Naive thymus-derived CD4-positive, alpha-beta T cell (primary cell): ENCODE measurements at regions of chr1 and their contacts with region 1.

Region 1: GRCh38 chr1:108691942-108692723 is at the start of gene PRPF38B:
- DNase-seq: peak; percentile 86 to 94 (median 93)
- ATAC-seq: peak; percentile 91
- H3K4me3 ChIP-seq: peak within 1 kb of the TSS; percentile 80
- H3K4me3 Mint-ChIP-seq: peak within 1 kb of the TSS; percentile 91 to 100 (median 97)
- H3K27ac ChIP-seq: peak within 1 kb of the TSS; percentile 90
- H3K27ac Mint-ChIP-seq: peak within 1 kb of the TSS; percentile 90 to 100 (median 98)
- H3K4me1 ChIP-seq: peaks cover 14 to 34% of the 10 kb centered on the region in 2 donors
- H3K4me1 Mint-ChIP-seq: peaks cover 24 to 52% (median 41%) of the 10 kb centered on the region in 7 donors
- H3K27me3 ChIP-seq: no peaks in the 10 kb centered on the region
- H3K27me3 Mint-ChIP-seq: peaks cover 0 to 10% (median 0%) of the 10 kb centered on the region in 5 donors
- total RNA-seq, gene PRPF38B: 85.5 to 136 (median 118) TPM

Region 2: GRCh38 chr1:108512239-108512981 is 179.7 kb before region 1 on chr1:
- CTCF ChIA-PET with region 1: interaction called, 9 read pairs
- POLR2A ChIA-PET with region 1: interaction called, 15 read pairs
- intact Hi-C with region 1: loop called (anchors 1 to 5 kb)
- DNase-seq: peak in 6 of 9 donors; percentile 27 to 58 (median 50)
- ATAC-seq: peak; percentile 85
- H3K4me3 ChIP-seq: no peak overlapping the region
- H3K4me3 Mint-ChIP-seq: no peak overlapping the region
- H3K27ac ChIP-seq: no peak overlapping the region
- H3K27ac Mint-ChIP-seq: no peak overlapping the region
- H3K4me1 ChIP-seq: no peaks in the 10 kb centered on the region
- H3K4me1 Mint-ChIP-seq: no peaks in the 10 kb centered on the region
- H3K27me3 ChIP-seq: no peaks in the 10 kb centered on the region
- H3K27me3 Mint-ChIP-seq: peaks cover 4 to 64% (median 12%) of the 10 kb centered on the region in 5 donors

Region 3: DNA sequence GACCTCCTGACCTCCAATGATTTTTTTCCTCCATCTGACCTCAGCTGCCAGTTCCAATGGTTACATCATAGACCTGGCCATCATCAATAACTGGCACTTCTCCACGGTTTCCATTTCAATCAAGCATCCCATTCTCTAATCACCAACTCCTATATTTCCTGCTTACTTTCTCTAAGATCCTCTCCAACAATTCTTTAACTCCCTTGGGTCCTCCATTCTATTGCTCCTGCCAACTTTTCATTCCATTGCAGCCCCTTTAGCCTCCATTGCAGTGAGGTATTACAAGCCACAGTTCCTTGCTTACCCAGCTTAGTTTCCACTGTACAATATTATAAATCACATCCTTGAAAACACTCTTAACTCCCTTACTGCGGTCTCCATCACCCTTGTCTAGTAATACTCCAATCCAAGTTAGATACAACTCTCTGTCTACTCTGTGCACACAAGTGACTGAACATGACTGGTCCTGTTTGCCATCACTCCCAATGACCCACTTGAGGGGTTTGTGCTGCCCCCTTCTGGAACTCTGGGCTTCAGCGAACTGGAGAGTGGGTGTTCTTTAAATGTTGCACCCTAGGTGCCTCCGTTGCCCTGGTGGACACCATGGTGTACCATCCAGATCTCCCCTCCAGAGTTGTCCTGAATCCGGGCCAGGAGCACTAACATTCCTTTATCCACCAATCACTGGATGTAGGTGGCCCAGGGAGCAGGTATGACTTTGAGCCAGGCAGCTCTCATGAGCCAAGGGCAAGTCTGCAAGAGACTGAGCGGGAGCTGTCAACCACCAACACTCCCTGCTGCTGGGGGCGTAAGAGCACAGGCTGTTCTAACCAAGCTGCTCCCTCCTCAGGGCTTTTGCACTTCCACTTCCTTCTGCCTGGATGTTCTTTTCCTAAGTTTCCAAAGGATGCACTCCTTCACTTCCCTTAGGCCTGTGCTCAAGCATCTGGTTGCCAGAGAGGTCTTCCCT is 16.8 kb after region 1 on chr1:
- CTCF ChIA-PET with region 1: interaction called, 16 read pairs
- POLR2A ChIA-PET with region 1: interaction called, 144 read pairs
- intact Hi-C with region 1: loop called (anchors 1 kb)
- DNase-seq: peak; percentile 24 to 65 (median 54)
- ATAC-seq: peak; percentile 87
- H3K4me3 ChIP-seq: no peak overlapping the region
- H3K4me3 Mint-ChIP-seq: peak overlapping the region in 2 of 10 donors; percentile 15 to 38
- H3K27ac ChIP-seq: no peak overlapping the region
- H3K27ac Mint-ChIP-seq: peak overlapping the region in 3 of 9 donors; percentile 1 to 38 (median 2)
- H3K4me1 ChIP-seq: peaks cover 21 to 24% of the 10 kb centered on the region in 2 donors
- H3K4me1 Mint-ChIP-seq: peaks cover 7 to 44% (median 33%) of the 10 kb centered on the region in 7 donors
- H3K27me3 ChIP-seq: no peaks in the 10 kb centered on the region
- H3K27me3 Mint-ChIP-seq: peaks cover 0 to 20% (median 0%) of the 10 kb centered on the region in 5 donors

Region 4: GRCh38 chr1:108852221-108852975 is 160.3 kb after region 1 on chr1:
- CTCF ChIA-PET with region 1: no interaction called
- POLR2A ChIA-PET with region 1: no interaction called
- intact Hi-C with region 1: no loop called
- DNase-seq: no peak
- ATAC-seq: peak; percentile 51
- H3K4me3 ChIP-seq: no peak overlapping the region
- H3K4me3 Mint-ChIP-seq: peak overlapping the region in 1 of 10 donors; percentile 40
- H3K27ac ChIP-seq: no peak overlapping the region
- H3K27ac Mint-ChIP-seq: no peak overlapping the region
- H3K4me1 ChIP-seq: no peaks in the 10 kb centered on the region
- H3K4me1 Mint-ChIP-seq: peaks cover 4 to 16% (median 7%) of the 10 kb centered on the region in 7 donors
- H3K27me3 ChIP-seq: no peaks in the 10 kb centered on the region
- H3K27me3 Mint-ChIP-seq: peaks cover 7 to 44% (median 19%) of the 10 kb centered on the region in 5 donors

Region 5: GRCh38 chr1:108897865-108898720 is 206.0 kb after region 1 on chr1:
- CTCF ChIA-PET with region 1: interaction called, 5 read pairs
- POLR2A ChIA-PET with region 1: interaction called, 27 read pairs
- intact Hi-C with region 1: loop called (anchors 1 kb)
- DNase-seq: peak in 7 of 9 donors; percentile 30 to 67 (median 54)
- ATAC-seq: peak; percentile 82
- H3K4me3 ChIP-seq: no peak overlapping the region
- H3K4me3 Mint-ChIP-seq: no peak overlapping the region
- H3K27ac ChIP-seq: no peak overlapping the region
- H3K27ac Mint-ChIP-seq: no peak overlapping the region
- H3K4me1 ChIP-seq: no peaks in the 10 kb centered on the region
- H3K4me1 Mint-ChIP-seq: peaks cover 0 to 4% (median 1%) of the 10 kb centered on the region in 7 donors
- H3K27me3 ChIP-seq: no peaks in the 10 kb centered on the region
- H3K27me3 Mint-ChIP-seq: peaks cover 0 to 4% (median 3%) of the 10 kb centered on the region in 5 donors

Region 6: GRCh38 chr1:109090196-109091077 is 398.3 kb after region 1 on chr1 and contains the start of gene TMEM167B:
- CTCF ChIA-PET with region 1: interaction called, 4 read pairs
- POLR2A ChIA-PET with region 1: interaction called, 13 read pairs
- intact Hi-C with region 1: no loop called
- DNase-seq: peak; percentile 71 to 92 (median 87)
- ATAC-seq: peak; percentile 98
- H3K4me3 ChIP-seq: peak within 1 kb of the TSS; percentile 84
- H3K4me3 Mint-ChIP-seq: peak within 1 kb of the TSS; percentile 88 to 98 (median 96)
- H3K27ac ChIP-seq: peak within 1 kb of the TSS; percentile 97
- H3K27ac Mint-ChIP-seq: peak within 1 kb of the TSS; percentile 90 to 99 (median 98)
- H3K4me1 ChIP-seq: peaks cover 14 to 18% of the 10 kb centered on the region in 2 donors
- H3K4me1 Mint-ChIP-seq: peaks cover 15 to 43% (median 36%) of the 10 kb centered on the region in 7 donors
- H3K27me3 ChIP-seq: no peaks in the 10 kb centered on the region
- H3K27me3 Mint-ChIP-seq: no peaks in the 10 kb centered on the region
- total RNA-seq, gene TMEM167B: 33.2 to 65.6 (median 41.2) TPM

Region 7: DNA sequence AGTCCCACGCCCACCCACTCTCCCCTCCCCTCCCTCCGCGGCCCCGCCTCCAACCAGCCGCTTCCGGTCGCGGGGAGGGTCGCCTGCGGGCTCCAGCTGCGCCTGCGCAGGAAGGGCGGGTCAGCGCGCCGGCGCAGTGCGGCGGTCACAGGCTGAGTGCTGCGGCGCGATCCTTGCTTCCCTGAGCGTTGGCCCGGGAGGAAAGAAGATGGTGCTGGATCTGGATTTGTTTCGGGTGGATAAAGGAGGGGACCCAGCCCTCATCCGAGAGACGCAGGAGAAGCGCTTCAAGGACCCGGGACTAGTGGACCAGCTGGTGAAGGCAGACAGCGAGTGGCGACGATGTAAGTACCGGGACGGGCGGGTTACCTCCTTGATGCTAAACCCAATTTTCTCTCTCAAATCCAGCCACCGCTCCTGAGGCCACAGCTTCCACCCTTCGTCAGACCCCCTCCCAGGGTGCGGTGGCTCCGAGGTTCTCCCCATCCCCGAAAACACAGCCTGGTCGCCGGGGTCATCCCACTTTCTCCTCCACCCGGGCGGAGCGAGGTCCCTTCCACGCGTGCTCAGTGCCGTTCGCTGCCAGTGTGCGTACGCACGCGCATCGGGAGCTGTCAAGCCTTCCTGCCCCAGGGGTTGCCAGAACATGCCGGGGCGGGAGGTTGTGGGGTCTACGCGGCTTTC is 521.8 kb after region 1 on chr1 and contains the start of gene SARS1:
- CTCF ChIA-PET with region 1: no interaction called
- POLR2A ChIA-PET with region 1: interaction called, 4 read pairs
- intact Hi-C with region 1: loop called (anchors 5 to 10 kb)
- DNase-seq: peak; percentile 77 to 96 (median 91)
- ATAC-seq: peak; percentile 91
- H3K4me3 ChIP-seq: peak within 1 kb of the TSS; percentile 97
- H3K4me3 Mint-ChIP-seq: peak within 1 kb of the TSS; percentile 94 to 100 (median 98)
- H3K27ac ChIP-seq: peak within 1 kb of the TSS; percentile 85
- H3K27ac Mint-ChIP-seq: peak within 1 kb of the TSS; percentile 85 to 98 (median 97)
- H3K4me1 ChIP-seq: peaks cover 22 to 27% of the 10 kb centered on the region in 2 donors
- H3K4me1 Mint-ChIP-seq: peaks cover 33 to 47% (median 42%) of the 10 kb centered on the region in 7 donors
- H3K27me3 ChIP-seq: no peaks in the 10 kb centered on the region
- H3K27me3 Mint-ChIP-seq: peaks cover 0 to 4% (median 0%) of the 10 kb centered on the region in 5 donors
- total RNA-seq, gene SARS1: 110 to 173 (median 135) TPM

Region 8: DNA sequence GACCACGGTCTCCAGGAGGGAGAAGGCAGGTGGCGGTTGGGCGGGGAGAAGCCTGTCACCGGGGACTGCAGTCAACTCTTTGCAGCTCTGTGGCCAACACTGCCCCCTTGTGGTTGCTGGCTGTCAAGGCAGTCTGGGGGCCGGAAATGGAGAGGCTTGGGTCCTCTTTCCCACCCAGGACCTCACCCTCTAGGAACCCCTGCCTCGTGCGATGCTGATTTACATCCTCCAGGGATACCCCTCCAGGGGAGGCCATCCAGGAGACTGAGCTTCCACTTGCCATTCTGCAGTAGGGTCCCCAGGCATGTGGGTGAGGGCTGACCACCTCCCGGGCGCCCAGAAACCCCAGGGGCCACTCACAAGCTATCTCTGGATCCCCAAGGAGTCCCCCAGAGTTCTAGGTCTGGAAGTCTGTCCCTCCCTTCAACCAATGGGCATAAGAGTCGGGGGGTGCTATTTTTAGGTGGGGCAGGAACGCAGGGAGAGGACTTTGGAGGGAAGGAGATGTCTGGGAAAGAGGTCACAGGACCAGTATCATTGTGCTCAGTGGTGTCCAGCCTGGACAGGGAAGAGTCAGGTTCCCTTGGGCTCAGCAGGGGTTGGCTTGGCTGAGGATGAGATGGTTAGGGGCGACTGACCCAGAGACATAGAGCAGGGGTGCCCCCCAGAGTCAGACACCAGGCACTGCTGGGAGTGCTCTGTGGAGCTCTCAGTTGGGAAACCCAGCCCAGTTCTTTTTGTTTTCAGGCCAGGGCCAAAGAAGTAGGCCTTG is 840.4 kb after region 1 on chr1:
- CTCF ChIA-PET with region 1: no interaction called
- POLR2A ChIA-PET with region 1: no interaction called
- intact Hi-C with region 1: loop called in 1 of 2 experiments (anchors 1 kb)
- DNase-seq: peak; percentile 79 to 96 (median 87)
- ATAC-seq: peak; percentile 94
- H3K4me3 ChIP-seq: peak overlapping the region; percentile 57
- H3K4me3 Mint-ChIP-seq: peak overlapping the region; percentile 78 to 91 (median 86)
- H3K27ac ChIP-seq: no peak overlapping the region
- H3K27ac Mint-ChIP-seq: peak overlapping the region; percentile 66 to 95 (median 86)
- H3K4me1 ChIP-seq: peaks cover 11 to 28% of the 10 kb centered on the region in 2 donors
- H3K4me1 Mint-ChIP-seq: peaks cover 22 to 40% (median 30%) of the 10 kb centered on the region in 7 donors
- H3K27me3 ChIP-seq: no peaks in the 10 kb centered on the region
- H3K27me3 Mint-ChIP-seq: no peaks in the 10 kb centered on the region